BJ (cell line): ENCODE measurements at regions of chr14 and their contacts with region 1.

Region 1: DNA sequence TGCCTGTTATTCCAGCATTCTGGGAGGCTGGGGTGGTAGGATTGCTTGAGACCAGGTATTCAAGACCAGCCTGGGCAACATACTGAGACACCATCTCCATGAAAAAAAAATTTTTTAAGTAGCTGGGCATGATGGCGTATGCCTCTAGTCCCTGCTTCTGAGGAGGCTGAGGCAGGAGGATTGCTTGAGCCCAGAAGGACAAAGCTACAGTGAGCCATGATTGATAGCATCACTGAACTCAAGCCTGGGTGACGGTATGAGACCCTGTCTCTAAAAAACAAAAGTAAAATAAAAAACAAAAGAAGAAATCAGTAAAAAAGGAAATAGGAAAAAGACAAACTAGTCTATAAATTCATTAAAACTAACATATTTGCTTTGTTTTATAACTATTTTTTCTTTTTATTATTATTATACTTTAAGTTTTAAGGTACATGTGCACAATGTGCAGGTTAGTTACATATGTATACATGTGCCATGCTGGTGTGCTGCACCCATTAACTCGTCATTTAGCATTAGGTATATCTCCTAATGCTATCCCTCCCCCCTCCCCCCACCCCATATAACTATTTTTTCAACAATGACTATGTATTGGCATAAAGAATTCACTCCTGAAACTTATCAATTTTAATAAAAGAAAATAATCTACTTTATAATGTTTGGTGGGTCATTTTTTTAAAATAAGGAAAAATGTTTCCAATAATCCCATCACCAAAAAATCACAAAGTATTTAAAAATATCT is 15.4 kb upstream of the AP4S1 start:
- DNase-seq: no peak
- H3K4me3 ChIP-seq: no peak overlapping the region
- H3K27me3 ChIP-seq: no peaks in the 10 kb centered on the region
- CTCF ChIP-seq: no peak

Region 2: GRCh38 chr14:31059152-31059924 is 49.3 kb after region 1 on chr14:
- CTCF ChIA-PET with region 1: no interaction called
- POLR2A ChIA-PET with region 1: interaction called, 12 read pairs
- DNase-seq: peak; percentile 39
- H3K4me3 ChIP-seq: no peak overlapping the region
- H3K27me3 ChIP-seq: no peaks in the 10 kb centered on the region
- CTCF ChIP-seq: no peak